Activated CD8-positive, alpha-beta T cell treated with anti-CD3 and anti-CD28 coated beads for 36 hours (primary cell): ENCODE measurements at regions of chr3 and their contacts with region 1.

Region 1: GRCh38 chr3:160163229-160163878 is 61.9 kb upstream of the C3orf80 start:
- DNase-seq: no peak
- ATAC-seq: no peak
- H3K4me3 Mint-ChIP-seq: no peak overlapping the region
- H3K27ac Mint-ChIP-seq: no peak overlapping the region
- H3K4me1 Mint-ChIP-seq: no peaks in the 10 kb centered on the region
- H3K27me3 Mint-ChIP-seq: peaks cover 7% of the 10 kb centered on the region
- CTCF ChIP-seq: peak; percentile 58

Region 2: DNA sequence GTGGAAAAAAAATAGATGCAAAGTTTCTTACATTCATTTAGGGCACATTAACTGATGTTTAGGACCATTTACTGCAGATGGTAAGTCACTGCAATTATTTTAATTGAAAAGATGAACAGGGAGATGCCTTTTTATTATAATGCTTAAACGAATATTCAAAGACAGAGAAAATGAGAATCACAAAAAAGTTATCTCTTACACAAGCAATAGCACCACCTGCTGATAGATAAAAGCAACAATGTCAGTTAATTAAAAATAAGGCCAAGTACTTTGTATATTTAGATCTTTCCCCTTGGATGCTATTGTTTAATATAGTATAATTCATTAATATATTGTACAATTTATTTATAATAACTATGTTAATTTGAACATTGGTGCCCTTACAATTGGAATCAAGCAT is 179.8 kb after region 1 on chr3:
- CTCF ChIA-PET with region 1: interaction called, 5 read pairs
- POLR2A ChIA-PET with region 1: no interaction called
- intact Hi-C with region 1: loop called (anchors 5 kb)
- DNase-seq: no peak
- ATAC-seq: no peak
- H3K4me3 Mint-ChIP-seq: no peak overlapping the region
- H3K27ac Mint-ChIP-seq: no peak overlapping the region
- H3K4me1 Mint-ChIP-seq: no peaks in the 10 kb centered on the region
- H3K27me3 Mint-ChIP-seq: no peaks in the 10 kb centered on the region
- CTCF ChIP-seq: peak; percentile 43

Region 3: DNA sequence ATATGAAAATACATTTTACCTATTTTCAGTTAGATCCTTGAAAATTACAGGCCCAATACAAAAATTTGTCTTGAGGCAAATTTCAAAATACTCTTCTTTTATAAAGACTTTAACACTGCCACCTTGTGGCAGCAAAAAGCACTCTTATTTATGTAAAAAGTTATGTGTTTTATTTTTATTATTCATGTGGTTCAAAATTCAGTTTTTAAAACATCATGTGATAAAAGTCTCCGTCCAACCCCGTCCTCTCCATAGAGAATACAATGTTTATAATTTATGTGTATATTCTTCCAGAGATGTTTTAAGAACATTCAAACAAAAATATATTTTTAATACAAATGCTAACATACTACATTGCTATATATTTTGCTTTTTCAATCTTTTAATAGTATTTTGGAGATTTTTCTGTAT is 323.1 kb after region 1 on chr3:
- CTCF ChIA-PET with region 1: interaction called, 4 read pairs
- POLR2A ChIA-PET with region 1: no interaction called
- intact Hi-C with region 1: loop called (anchors 10 kb)
- DNase-seq: peak; percentile 26
- ATAC-seq: no peak
- H3K4me3 Mint-ChIP-seq: no peak overlapping the region
- H3K27ac Mint-ChIP-seq: no peak overlapping the region
- H3K4me1 Mint-ChIP-seq: peaks cover 3% of the 10 kb centered on the region
- H3K27me3 Mint-ChIP-seq: peaks cover 1% of the 10 kb centered on the region
- CTCF ChIP-seq: peak; percentile 66